ENCODE measurements at regions of chr19 and their contacts with region 1.

Region 1: GRCh38 chr19:12166626-12167025 is 3.7 kb downstream of the ZNF136 start:
- DNase-seq: no peak
- ATAC-seq: no peak

Region 2: DNA sequence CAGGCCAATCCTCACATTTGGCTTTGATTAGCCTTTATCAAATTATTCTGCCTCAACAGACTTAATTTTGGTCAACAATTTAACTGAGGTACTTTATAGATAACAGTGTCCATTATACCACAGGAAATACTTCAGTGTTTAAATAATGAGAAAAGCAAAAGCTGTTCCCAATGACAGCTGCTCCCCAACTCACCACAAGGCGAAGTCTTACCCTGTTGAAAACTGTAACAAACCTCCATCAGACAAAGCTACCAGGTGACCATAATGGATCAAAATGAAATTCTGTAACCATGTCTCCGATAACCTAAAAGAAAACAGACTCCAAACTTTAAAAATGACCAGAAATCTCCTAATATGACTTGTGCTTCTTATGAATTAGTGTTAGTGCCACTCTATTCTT is 77.7 kb after region 1 on chr19:
- intact Hi-C with region 1: loop called (anchors 5 kb)
- DNase-seq: no peak
- ATAC-seq: no peak

Measured in left ventricle myocardium superior (tissue), 1 donor.